Panc1 (cell line): ENCODE measurements at regions of chr7 and their contacts with region 1.

Region 1: GRCh38 chr7:43454936-43455518 is 127.9 kb upstream of the STK17A start:
- DNase-seq: no peak
- ATAC-seq: peak; percentile 76; the same call in 1 of the 2 replicates
- H3K4me3 ChIP-seq: no peak overlapping the region
- H3K27ac ChIP-seq: no peak overlapping the region
- H3K4me1 ChIP-seq: no peaks in the 10 kb centered on the region
- H3K27me3 ChIP-seq: peaks cover 33% of the 10 kb centered on the region
- CTCF ChIP-seq: peak; percentile 80

Region 2: GRCh38 chr7:42550706-42551470 is 904.1 kb before region 1 on chr7:
- CTCF ChIA-PET with region 1: no interaction called
- POLR2A ChIA-PET with region 1: no interaction called
- in situ Hi-C with region 1: no loop called
- intact Hi-C with region 1: no loop called
- DNase-seq: no peak
- ATAC-seq: no peak
- H3K4me3 ChIP-seq: no peak overlapping the region
- H3K27ac ChIP-seq: no peak overlapping the region
- H3K4me1 ChIP-seq: no peaks in the 10 kb centered on the region
- H3K27me3 ChIP-seq: no peaks in the 10 kb centered on the region
- CTCF ChIP-seq: no peak

Region 3: GRCh38 chr7:43108255-43109011 is 346.6 kb before region 1 on chr7:
- CTCF ChIA-PET with region 1: interaction called, 10 read pairs
- POLR2A ChIA-PET with region 1: no interaction called
- in situ Hi-C with region 1: no loop called
- intact Hi-C with region 1: no loop called
- DNase-seq: peak; percentile 47
- ATAC-seq: peak; percentile 95
- H3K4me3 ChIP-seq: no peak overlapping the region
- H3K27ac ChIP-seq: no peak overlapping the region
- H3K4me1 ChIP-seq: no peaks in the 10 kb centered on the region
- H3K27me3 ChIP-seq: peaks cover 21% of the 10 kb centered on the region
- CTCF ChIP-seq: peak; percentile 95

Region 4: GRCh38 chr7:43163885-43164284 is 291.1 kb before region 1 on chr7:
- CTCF ChIA-PET with region 1: interaction called, 11 read pairs
- POLR2A ChIA-PET with region 1: no interaction called
- in situ Hi-C with region 1: no loop called
- intact Hi-C with region 1: no loop called
- DNase-seq: no peak
- ATAC-seq: no peak
- H3K4me3 ChIP-seq: no peak overlapping the region
- H3K27ac ChIP-seq: no peak overlapping the region
- H3K4me1 ChIP-seq: no peaks in the 10 kb centered on the region
- H3K27me3 ChIP-seq: no peaks in the 10 kb centered on the region
- CTCF ChIP-seq: no peak